GM10248 (cell line): ENCODE measurements at regions of chr1 and their contacts with region 1.

Region 1: GRCh38 chr1:112754116-112754628 is 39.0 kb upstream of the PPM1J start:
- DNase-seq: no peak
- CTCF ChIP-seq: no peak

Region 2: GRCh38 chr1:112466078-112466660 is 288.0 kb before region 1 on chr1:
- CTCF ChIA-PET with region 1: no interaction called
- POLR2A ChIA-PET with region 1: no interaction called
- DNase-seq: peak; percentile 87
- CTCF ChIP-seq: peak; percentile 87

Region 3: DNA sequence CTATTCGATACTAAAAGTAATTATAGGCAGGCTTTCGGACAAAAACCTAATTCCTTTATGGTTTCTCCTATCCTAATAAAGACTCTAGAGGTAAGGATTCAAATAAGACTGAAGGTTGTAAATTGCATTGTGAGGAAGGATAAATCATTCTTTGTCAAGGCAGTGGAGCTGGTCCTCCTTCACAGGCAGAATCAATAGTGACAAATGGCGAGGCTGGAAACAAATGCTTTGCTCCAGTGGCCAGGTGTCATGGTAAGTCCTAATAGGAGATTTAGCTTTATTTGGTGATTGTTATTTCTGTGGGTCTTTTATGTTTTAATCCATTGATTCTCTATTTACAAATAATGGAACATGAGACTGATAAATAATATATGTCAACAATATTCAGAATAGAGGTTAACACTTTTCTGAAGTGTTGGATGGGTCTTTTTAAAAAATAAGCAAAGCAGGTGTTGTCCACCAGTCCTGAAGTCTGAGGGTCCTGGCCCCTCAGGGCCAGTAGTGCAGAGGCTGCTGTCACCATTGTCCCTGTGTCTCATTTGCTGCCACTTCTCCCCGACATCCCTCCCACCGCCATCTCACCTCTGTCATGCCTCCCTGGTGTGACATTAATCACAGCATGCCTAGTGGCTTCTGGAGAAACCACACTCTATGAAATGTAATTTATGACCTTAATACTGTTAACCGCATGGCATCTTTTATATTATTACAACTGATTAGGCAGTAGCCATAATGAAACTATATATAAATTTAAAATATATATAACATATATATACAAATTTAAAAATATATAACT is 515.2 kb after region 1 on chr1:
- CTCF ChIA-PET with region 1: no interaction called
- POLR2A ChIA-PET with region 1: interaction called, 13 read pairs
- DNase-seq: no peak
- CTCF ChIP-seq: no peak